ENCODE measurements at regions of chr15 and their contacts with region 1.

Region 1: GRCh38 chr15:74768771-74769342 is 13.0 kb upstream of the CSK start:
- DNase-seq: peak; percentile 70
- H3K4me3 Mint-ChIP-seq: no peak overlapping the region
- H3K27ac Mint-ChIP-seq: no peak overlapping the region
- H3K4me1 Mint-ChIP-seq: peaks cover 6% of the 10 kb centered on the region
- H3K27me3 Mint-ChIP-seq: no peaks in the 10 kb centered on the region
- CTCF ChIP-seq: peak; percentile 81

Region 2: DNA sequence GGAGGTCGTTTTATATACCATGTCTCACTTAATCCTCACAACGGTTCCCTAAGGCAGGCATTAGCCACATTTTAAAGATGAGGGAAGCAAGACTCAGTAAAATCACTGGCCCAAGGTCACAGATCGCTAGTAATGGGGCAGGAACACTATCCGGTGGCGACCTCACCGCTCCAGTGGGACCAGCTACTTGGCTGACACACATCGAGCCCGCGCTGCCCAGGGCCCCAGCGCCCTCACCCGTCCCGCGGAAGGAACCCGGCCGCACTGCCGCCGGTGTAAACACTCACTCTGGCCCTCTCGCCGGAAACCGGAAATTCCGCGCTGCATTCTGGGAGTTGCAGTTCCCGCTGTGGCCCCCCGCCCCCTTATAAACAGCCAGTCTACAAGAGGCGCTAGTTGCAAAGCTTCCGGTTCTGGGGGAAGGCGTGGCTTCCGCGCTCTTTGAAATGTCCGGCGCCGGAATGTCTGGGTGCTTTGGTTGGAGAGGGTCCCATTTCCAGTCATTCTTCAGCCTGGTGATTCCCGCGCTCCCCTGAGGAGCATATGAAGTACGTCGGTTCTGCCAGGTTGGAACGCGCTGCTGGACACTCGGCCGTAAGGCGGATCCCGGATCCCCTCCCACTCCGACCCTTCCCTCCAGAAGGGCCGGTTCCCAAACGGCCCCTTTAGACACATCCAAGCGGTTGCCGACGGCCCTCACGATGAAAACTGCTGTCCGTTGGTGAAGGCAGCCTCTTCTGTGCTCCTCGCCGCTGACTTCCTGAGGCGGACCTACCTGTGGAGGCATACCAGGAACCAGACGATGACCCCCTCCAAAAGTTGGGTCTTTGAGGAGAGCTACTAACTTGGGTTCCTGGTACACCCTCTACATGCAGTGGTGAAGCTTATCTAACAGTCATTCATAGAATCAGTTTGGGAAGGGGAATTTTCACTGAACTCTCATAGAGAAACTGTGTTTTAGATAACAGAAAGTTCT is 307.7 kb before region 1 on chr15 and contains the start of gene UBL7:
- CTCF ChIA-PET with region 1: interaction called, 3 read pairs
- POLR2A ChIA-PET with region 1: no interaction called
- intact Hi-C with region 1: loop called (anchors 10 kb)
- DNase-seq: peak; percentile 97
- H3K4me3 Mint-ChIP-seq: peak within 1 kb of the TSS; percentile 93
- H3K27ac Mint-ChIP-seq: peak within 1 kb of the TSS; percentile 70
- H3K4me1 Mint-ChIP-seq: peaks cover 30% of the 10 kb centered on the region
- H3K27me3 Mint-ChIP-seq: no peaks in the 10 kb centered on the region
- CTCF ChIP-seq: no peak
- total RNA-seq, gene UBL7: 55.5 and 56.4 TPM in 2 replicates

Region 3: GRCh38 chr15:74565381-74566085 is 203.3 kb before region 1 on chr15:
- CTCF ChIA-PET with region 1: no interaction called
- POLR2A ChIA-PET with region 1: no interaction called
- intact Hi-C with region 1: no loop called
- DNase-seq: no peak
- H3K4me3 Mint-ChIP-seq: no peak overlapping the region
- H3K27ac Mint-ChIP-seq: no peak overlapping the region
- H3K4me1 Mint-ChIP-seq: no peaks in the 10 kb centered on the region
- H3K27me3 Mint-ChIP-seq: no peaks in the 10 kb centered on the region
- CTCF ChIP-seq: no peak

Region 4: DNA sequence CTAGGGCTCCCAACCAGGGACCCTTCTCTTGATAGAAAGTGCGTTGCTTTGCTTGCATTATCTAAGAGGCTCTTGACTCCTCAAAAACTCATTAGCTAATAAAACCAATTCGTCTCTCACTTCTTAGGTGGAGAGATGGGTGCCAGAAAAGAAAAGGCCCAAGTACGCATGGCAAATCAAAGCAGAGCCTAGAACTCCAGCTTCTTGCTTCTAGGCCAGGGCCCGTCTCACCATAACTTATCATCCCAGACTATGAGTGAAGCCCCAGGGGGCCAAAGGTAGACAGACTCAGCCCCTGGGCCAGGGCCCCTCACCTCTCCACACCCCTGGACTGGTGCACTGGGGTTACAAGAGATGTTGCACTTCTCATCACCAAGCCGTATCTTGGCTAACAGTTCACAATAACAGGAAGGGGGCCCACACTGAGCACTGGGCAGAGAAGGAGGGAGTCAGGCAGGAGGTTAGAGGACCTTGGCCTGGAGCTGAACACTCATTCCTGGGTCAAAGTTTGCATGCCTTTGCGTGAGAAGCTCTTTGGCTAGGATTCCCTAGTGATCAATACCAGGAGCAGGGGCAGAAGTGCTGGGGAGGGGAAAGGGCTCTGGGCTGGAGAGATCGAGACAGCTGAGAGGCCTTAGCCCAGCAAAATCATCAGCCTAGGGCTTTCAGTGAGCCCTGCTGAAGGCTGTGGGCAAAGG is 38.1 kb before region 1 on chr15:
- CTCF ChIA-PET with region 1: interaction called, 10 read pairs
- POLR2A ChIA-PET with region 1: interaction called, 3 read pairs
- intact Hi-C with region 1: no loop called
- DNase-seq: no peak
- H3K4me3 Mint-ChIP-seq: no peak overlapping the region
- H3K27ac Mint-ChIP-seq: no peak overlapping the region
- H3K4me1 Mint-ChIP-seq: no peaks in the 10 kb centered on the region
- H3K27me3 Mint-ChIP-seq: peaks cover 8% of the 10 kb centered on the region
- CTCF ChIP-seq: no peak

Region 5: DNA sequence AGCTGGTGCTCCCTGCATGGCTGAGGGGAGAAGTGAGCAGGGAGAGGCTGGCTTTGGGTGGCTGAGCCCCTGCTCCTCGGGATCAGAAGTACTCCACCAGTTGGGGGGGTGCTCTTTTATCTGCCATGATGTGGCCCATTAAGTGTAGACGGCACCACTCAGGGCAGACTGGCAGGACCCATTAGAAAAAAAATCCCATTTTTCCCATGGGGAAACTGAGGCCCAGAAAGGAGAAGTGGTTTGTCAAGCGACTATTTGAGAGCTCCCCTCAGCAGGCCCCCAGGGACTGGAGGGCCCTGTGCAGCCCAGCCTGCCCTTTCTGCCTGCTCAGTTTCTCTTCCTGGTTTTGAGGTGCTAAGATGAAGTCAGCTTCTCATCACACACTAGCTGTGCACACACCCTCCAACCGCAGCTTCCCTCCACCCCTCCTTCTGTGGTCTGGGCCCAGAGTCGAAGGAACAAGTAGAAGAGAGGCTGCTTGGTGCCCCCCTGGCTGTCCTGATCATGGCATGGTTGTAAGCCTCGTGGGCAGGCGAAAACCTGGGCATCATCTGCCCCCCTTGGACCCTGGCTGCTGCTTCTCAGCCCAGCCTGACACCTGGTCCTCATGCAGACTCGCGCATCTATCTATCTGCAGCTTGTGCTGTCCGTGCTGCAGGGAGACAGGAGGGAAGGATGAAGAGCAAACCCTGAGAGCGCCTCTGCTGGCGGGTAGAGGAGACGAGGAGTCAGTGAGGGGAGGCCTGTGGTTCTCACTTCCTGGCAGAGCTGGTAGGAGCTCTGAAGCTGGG is 18.6 kb after region 1 on chr15:
- CTCF ChIA-PET with region 1: interaction called, 57 read pairs
- POLR2A ChIA-PET with region 1: interaction called, 3 read pairs
- intact Hi-C with region 1: no loop called
- DNase-seq: peak; percentile 40
- H3K4me3 Mint-ChIP-seq: no peak overlapping the region
- H3K27ac Mint-ChIP-seq: no peak overlapping the region
- H3K4me1 Mint-ChIP-seq: peaks cover 53% of the 10 kb centered on the region
- H3K27me3 Mint-ChIP-seq: no peaks in the 10 kb centered on the region
- CTCF ChIP-seq: no peak

Region 6: DNA sequence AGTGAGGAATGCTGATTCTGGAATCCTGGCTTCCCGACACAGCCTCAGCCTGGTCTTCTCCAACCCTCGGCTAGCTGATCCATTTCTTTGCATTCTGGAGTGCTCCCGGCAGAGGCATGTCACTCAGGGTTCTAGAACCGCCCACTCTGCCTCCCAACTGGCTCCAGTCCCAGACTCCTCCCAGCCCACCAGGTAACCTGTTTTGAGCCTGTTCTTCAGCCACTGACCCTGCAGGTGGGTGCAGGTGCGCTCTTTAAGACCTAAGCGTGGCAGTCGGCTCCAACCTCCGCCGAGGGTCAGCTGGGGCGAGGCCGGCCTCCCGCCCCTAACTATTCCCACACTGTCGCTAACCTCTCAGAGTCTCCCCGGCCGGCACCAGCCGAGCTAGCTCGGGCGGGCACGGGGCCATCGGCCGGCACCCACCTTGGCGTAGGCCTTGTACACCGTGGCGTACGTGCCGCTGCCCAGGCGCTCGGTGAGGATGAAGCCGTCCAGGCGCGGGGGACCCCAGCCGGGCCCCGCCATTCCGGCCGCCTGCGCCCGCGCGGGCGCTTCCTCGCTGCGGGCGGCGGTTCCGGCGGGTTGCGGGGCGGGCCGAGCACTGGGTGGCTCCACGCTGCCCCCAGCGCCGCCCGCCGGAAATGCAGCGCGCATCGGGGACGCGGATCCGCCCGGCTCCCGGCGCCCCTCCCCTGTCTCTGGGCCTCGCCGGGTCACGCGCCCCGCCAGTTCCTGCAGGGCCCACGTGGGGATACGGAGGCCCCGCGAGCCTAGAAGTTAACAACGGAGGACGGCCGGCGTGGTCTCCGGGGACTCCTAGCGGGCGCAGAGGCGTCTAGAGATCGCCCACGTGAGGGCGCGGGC is 74.0 kb after region 1 on chr15 and contains the start of gene ULK3:
- CTCF ChIA-PET with region 1: interaction called, 12 read pairs
- POLR2A ChIA-PET with region 1: interaction called, 4 read pairs
- intact Hi-C with region 1: no loop called
- DNase-seq: peak; percentile 89
- H3K4me3 Mint-ChIP-seq: peak within 1 kb of the TSS; percentile 83
- H3K27ac Mint-ChIP-seq: peak within 1 kb of the TSS; percentile 49
- H3K4me1 Mint-ChIP-seq: no peaks in the 10 kb centered on the region
- H3K27me3 Mint-ChIP-seq: no peaks in the 10 kb centered on the region
- CTCF ChIP-seq: peak; percentile 76
- total RNA-seq, gene ULK3: 27.6 and 31.3 TPM in 2 replicates

Region 7: DNA sequence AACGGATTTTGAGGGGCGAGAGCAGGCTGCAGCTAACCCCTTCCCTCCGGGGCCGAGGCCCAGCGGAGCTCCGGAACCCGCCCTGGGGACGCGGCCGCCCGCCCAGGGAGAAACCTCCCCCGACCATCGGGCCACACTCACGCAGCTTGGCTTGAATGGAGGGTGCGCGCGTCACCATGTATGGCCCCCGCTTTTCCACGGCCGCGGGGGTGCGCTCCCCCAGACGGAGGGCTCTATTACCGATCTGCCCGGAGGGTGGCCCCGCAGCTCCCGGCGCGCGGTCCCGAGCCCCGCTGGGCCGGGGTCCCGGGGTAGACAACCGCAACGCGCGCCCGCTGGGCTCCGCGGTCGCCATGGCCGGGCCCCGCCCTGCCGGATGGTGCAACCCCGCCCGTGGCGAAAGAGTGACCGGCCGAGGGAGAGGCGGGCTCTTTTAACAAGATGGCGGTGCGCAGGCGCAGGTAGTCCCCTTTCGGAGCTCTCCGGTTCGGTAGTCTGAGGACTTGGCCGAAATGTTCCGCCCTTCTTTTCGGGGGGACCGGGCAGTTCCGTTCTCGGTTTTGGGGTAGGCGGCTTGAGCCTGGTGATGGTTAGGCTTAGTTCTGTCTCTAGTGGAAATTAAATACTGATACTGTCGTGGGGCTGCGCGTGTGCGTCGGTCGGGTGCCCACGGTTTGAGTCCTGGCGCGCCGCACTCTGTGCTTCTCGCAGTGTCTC is 137.7 kb after region 1 on chr15 and contains the start of gene FAM219B:
- CTCF ChIA-PET with region 1: interaction called, 28 read pairs
- POLR2A ChIA-PET with region 1: interaction called, 5 read pairs
- intact Hi-C with region 1: loop called (anchors 1 kb)
- DNase-seq: peak; percentile 87
- H3K4me3 Mint-ChIP-seq: peak within 1 kb of the TSS; percentile 95
- H3K27ac Mint-ChIP-seq: peak within 1 kb of the TSS; percentile 97
- H3K4me1 Mint-ChIP-seq: peaks cover 15% of the 10 kb centered on the region
- H3K27me3 Mint-ChIP-seq: no peaks in the 10 kb centered on the region
- CTCF ChIP-seq: no peak
- total RNA-seq, gene FAM219B: 62.9 and 68.4 TPM in 2 replicates

Region 8: GRCh38 chr15:74956648-74957300 is 187.9 kb after region 1 on chr15 and contains the start of gene RPP25:
- CTCF ChIA-PET with region 1: interaction called, 128 read pairs
- POLR2A ChIA-PET with region 1: no interaction called
- intact Hi-C with region 1: no loop called
- DNase-seq: peak; percentile 76
- H3K4me3 Mint-ChIP-seq: peak within 1 kb of the TSS; percentile 68
- H3K27ac Mint-ChIP-seq: no peak within 1 kb of the TSS
- H3K4me1 Mint-ChIP-seq: no peaks in the 10 kb centered on the region
- H3K27me3 Mint-ChIP-seq: no peaks in the 10 kb centered on the region
- CTCF ChIP-seq: no peak
- total RNA-seq, gene RPP25: 0.17 TPM in 1 of 2 replicates, not detected in the other